Activated naive CD4-positive, alpha-beta T cell treated with anti-CD3 and anti-CD28 coated beads for 36 hours (primary cell): ENCODE measurements at regions of chr16 and their contacts with region 1.

Region 1: DNA sequence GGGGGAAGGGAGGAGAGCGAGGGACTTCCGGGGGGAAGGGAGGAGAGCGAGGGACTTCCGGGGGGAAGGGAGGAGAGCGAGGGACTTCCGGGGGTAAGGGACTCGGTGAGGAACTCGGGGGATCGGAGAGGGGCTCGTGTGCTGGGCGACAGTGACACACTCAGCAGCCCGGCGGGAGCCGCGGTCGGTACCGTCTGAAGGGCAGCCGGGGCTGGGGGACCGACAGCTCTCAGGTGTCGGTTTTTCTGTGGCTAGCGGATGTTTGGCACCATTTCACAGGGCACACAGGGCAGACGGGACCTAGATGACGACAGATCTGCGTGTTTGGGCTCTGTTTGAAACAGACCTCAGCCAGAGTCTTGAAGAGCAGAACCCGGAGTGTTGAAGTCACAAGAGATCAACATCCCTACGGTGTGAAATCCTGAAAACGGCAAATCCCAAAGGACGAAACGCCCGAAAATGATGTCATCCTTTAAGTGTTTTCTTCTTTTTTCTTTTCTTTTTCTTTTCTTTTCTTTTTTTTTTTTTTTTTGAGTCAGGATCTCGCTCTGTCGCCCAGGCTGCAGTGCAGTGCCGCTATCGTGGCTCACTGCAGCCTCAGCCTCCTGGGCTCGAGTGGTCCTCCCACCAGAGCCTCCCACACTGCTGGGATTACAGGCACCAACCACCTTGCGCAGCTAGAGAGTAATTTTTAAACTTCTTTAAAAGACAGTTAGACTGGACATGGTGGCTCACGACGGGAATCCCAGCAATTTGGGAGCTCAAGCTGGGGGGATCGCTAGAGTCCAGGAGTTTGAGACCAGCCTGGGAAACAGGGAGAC is 23.9 kb downstream of the ZNF778 start:
- DNase-seq: peak; percentile 77
- H3K4me3 Mint-ChIP-seq: peak overlapping the region; percentile 95
- H3K27ac Mint-ChIP-seq: peak overlapping the region; percentile 95
- H3K4me1 Mint-ChIP-seq: peaks cover 16% of the 10 kb centered on the region
- H3K27me3 Mint-ChIP-seq: no peaks in the 10 kb centered on the region

Region 2: DNA sequence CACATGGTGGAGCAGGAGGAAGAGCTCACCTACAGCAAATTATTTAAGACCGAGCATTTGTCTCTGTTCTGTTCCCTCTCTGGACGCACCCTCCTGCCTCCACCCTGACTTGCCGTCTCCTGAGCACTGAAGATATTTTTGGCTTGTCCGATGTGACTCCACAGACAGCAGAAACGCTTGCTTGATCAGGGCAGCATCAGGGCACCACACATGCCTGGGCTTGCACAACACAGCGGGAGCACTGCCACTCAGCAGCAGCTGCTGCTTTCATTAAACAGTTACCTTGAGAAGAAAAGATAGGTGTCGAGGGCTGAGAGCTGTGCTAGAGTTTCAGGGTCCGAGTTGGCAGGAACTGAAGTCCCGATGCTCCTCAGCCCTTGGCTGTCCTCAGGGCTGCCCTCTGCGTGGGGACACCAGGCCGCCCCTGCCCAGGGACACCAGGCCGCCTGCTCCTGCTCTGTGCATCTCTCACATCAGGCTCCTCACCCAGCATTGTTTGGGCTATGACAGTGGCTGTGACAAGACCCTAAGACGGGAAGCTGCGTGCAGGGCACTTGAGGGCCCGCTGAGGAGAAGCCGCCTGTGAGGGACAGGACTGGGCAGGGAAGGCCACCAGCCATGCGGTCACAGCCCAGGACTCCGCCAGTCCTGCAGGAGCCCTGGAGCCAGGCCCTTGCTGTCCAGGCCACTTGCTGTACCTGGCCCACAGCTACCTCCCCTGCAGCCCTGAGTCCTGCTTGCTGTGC is 91.1 kb before region 1 on chr16:
- CTCF ChIA-PET with region 1: no interaction called
- intact Hi-C with region 1: no loop called
- DNase-seq: no peak
- H3K4me3 Mint-ChIP-seq: no peak overlapping the region
- H3K27ac Mint-ChIP-seq: peak overlapping the region; percentile 56
- H3K4me1 Mint-ChIP-seq: no peaks in the 10 kb centered on the region
- H3K27me3 Mint-ChIP-seq: no peaks in the 10 kb centered on the region

Region 3: GRCh38 chr16:89217388-89218191 is 23.8 kb before region 1 on chr16 and contains the start of gene ZNF778:
- CTCF ChIA-PET with region 1: interaction called, 4 read pairs
- intact Hi-C with region 1: loop called (anchors 1 kb)
- DNase-seq: peak; percentile 83
- H3K4me3 Mint-ChIP-seq: peak within 1 kb of the TSS; percentile 83
- H3K27ac Mint-ChIP-seq: peak within 1 kb of the TSS; percentile 89
- H3K4me1 Mint-ChIP-seq: peaks cover 20% of the 10 kb centered on the region
- H3K27me3 Mint-ChIP-seq: no peaks in the 10 kb centered on the region
- total RNA-seq, gene ZNF778: 3.5 to 3.6 TPM

Region 4: GRCh38 chr16:89490387-89491237 is 249.2 kb after region 1 on chr16 and contains the start of gene ANKRD11:
- CTCF ChIA-PET with region 1: no interaction called
- intact Hi-C with region 1: loop called (anchors 2 kb)
- DNase-seq: peak; percentile 99
- H3K4me3 Mint-ChIP-seq: peak within 1 kb of the TSS; percentile 96
- H3K27ac Mint-ChIP-seq: peak within 1 kb of the TSS; percentile 98
- H3K4me1 Mint-ChIP-seq: peaks cover 50% of the 10 kb centered on the region
- H3K27me3 Mint-ChIP-seq: no peaks in the 10 kb centered on the region
- total RNA-seq, gene ANKRD11: 174 to 177 TPM

Region 5: DNA sequence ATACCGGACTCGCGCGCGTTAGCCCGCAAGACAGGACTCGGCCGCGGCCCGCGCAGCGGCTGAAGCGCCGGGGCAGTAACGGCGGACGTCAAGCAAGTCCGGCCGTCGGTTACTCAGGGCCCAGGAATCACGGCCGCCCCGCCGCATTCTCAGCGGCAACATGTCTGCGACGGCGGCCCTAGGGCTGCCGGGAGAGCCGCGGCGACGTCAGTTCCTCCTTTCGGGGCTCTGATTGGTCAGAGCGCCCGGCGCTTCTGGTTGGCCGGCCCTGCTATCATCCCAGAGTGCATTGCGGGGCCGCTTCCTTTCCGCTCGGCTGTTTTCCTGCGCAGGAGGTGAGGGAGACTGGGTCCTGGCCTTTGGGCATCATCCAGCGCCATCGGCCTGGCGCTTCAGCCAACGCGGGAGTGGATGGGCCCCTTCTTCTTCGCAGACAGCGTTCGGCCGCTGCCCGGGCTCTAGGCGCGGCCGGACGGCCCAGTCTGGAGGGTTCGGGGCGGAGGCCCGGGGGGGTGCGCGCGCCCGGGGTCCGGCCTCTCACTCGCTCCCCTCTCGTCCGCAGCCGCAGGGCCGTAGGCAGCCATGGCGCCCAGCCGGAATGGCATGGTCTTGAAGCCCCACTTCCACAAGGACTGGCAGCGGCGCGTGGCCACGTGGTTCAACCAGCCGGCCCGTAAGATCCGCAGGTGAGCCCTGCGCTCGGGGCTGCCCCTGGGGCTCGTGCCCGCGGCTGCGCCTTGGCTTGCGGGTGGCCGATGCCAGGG is 319.2 kb after region 1 on chr16 and contains the start of gene RPL13:
- CTCF ChIA-PET with region 1: no interaction called
- intact Hi-C with region 1: loop called (anchors 2 kb)
- DNase-seq: peak; percentile 96
- H3K4me3 Mint-ChIP-seq: peak within 1 kb of the TSS; percentile 97
- H3K27ac Mint-ChIP-seq: peak within 1 kb of the TSS; percentile 98
- H3K4me1 Mint-ChIP-seq: peaks cover 46% of the 10 kb centered on the region
- H3K27me3 Mint-ChIP-seq: no peaks in the 10 kb centered on the region
- total RNA-seq, gene RPL13: 3,875 to 3,899 TPM

Region 6: DNA sequence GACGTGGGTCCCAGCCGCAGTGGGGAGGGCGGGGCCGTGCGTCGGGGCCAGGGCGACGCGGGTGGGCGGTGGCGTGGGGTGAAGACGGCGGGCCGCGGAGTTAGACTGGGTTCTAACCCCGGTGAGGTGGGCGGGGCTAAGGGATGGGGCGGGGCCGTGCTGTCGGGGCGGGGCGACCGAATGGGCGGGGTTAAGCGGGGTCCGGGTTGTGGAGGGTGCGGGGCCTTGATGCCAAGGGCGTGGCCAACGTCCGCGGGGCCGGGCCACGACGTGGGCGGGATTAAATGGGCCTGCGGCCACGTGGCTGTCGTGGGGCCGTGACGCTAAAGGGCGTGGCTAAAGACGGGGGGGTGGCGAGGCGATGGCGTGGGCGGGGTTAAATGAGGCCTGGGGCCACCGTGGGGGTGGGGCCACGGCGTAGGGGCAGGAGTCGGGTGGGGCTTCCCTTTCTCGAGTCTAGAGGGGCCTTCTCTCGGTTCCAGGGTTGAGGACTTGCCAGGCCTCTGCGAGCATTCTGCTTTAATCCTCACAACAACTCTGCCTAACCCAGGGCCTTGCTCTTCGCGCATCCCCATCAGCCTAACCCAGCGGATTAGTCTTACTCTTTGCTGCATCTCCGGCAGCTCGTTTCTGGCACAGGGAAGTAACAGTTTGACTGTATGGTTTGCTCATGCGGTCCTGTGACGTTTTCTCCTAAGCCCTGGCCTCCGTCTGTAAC is 632.7 kb after region 1 on chr16:
- CTCF ChIA-PET with region 1: no interaction called
- intact Hi-C with region 1: loop called (anchors 10 kb)
- DNase-seq: peak; percentile 95
- H3K4me3 Mint-ChIP-seq: peak overlapping the region; percentile 91
- H3K27ac Mint-ChIP-seq: peak overlapping the region; percentile 95
- H3K4me1 Mint-ChIP-seq: peaks cover 13% of the 10 kb centered on the region
- H3K27me3 Mint-ChIP-seq: no peaks in the 10 kb centered on the region